PC-3 (cell line): ENCODE measurements at regions of chr21 and their contacts with region 1.

Region 1: GRCh38 chr21:25790122-25790877 is 55.5 kb downstream of the GABPA start:
- DNase-seq: peak; percentile 58
- ATAC-seq: peak; percentile 85
- H3K4me3 ChIP-seq: peak overlapping the region; percentile 54
- H3K27ac ChIP-seq: peak overlapping the region; percentile 12
- H3K4me1 ChIP-seq: peaks cover 12% of the 10 kb centered on the region; the same call in 1 of the 2 replicates
- H3K27me3 ChIP-seq: no peaks in the 10 kb centered on the region
- CTCF ChIP-seq: peak; percentile 72

Region 2: GRCh38 chr21:25837533-25838265 is 47.4 kb after region 1 on chr21:
- CTCF ChIA-PET with region 1: no interaction called
- POLR2A ChIA-PET with region 1: no interaction called
- intact Hi-C with region 1: loop called (anchors 5 kb)
- DNase-seq: peak; percentile 88
- ATAC-seq: peak; percentile 59
- H3K4me3 ChIP-seq: no peak overlapping the region
- H3K27ac ChIP-seq: no peak overlapping the region
- H3K4me1 ChIP-seq: peaks cover 30% of the 10 kb centered on the region
- H3K27me3 ChIP-seq: no peaks in the 10 kb centered on the region; the same call in 1 of the 2 replicates
- CTCF ChIP-seq: no peak